Motor neuron (in vitro differentiated cells): ENCODE measurements at regions of chr12 and their contacts with region 1.

Region 1: GRCh38 chr12:64714551-64714968 is 44.6 kb downstream of the GNS start:
- ATAC-seq: no peak
- H3K4me3 ChIP-seq: no peak overlapping the region
- H3K27ac ChIP-seq: no peak overlapping the region
- H3K4me1 ChIP-seq: no peaks in the 10 kb centered on the region

Region 2: GRCh38 chr12:64431791-64432190 is 282.8 kb before region 1 on chr12:
- in situ Hi-C with region 1: loop called in 1 of 9 experiments (anchors 25 kb)
- ATAC-seq: no peak
- H3K4me3 ChIP-seq: no peak overlapping the region
- H3K27ac ChIP-seq: no peak overlapping the region
- H3K4me1 ChIP-seq: no peaks in the 10 kb centered on the region

Region 3: DNA sequence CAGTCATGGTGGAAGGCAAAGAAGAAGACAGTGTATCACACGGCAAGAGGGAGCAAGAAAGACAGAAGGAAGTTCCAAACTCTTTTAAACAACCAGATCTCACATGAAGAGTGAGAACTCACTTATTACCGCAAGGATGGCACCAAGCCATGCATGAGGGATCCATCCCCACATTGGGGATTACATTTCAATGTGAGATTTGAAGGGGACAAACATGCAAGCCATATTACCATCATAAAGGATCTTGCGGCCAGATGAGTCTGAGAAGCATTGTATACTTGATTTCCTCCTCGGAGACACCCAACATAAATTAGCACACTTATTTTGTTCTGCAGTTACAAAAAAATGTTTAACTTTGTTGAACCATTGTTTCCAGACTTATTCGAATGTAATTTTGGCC is 196.2 kb before region 1 on chr12:
- in situ Hi-C with region 1: no loop called
- ATAC-seq: peak in 1 of 8 experiments; percentile 42
- H3K4me3 ChIP-seq: no peak overlapping the region
- H3K27ac ChIP-seq: no peak overlapping the region
- H3K4me1 ChIP-seq: peaks cover 13% of the 10 kb centered on the region in 2 donors

Region 4: GRCh38 chr12:64528616-64529015 is 185.9 kb before region 1 on chr12:
- in situ Hi-C with region 1: loop called in 1 of 9 experiments (anchors 25 kb)
- ATAC-seq: no peak
- H3K4me3 ChIP-seq: no peak overlapping the region
- H3K27ac ChIP-seq: no peak overlapping the region
- H3K4me1 ChIP-seq: peaks cover 3 to 5% of the 10 kb centered on the region in 2 donors

Region 5: GRCh38 chr12:64669270-64669842 is 45.2 kb before region 1 on chr12:
- in situ Hi-C with region 1: no loop called
- ATAC-seq: peak; percentile 9 to 80 (median 48)
- H3K4me3 ChIP-seq: no peak overlapping the region
- H3K27ac ChIP-seq: no peak overlapping the region
- H3K4me1 ChIP-seq: peaks cover 24 to 25% of the 10 kb centered on the region in 2 donors